ENCODE measurements at regions of chr11 and their contacts with region 1.

Region 1: DNA sequence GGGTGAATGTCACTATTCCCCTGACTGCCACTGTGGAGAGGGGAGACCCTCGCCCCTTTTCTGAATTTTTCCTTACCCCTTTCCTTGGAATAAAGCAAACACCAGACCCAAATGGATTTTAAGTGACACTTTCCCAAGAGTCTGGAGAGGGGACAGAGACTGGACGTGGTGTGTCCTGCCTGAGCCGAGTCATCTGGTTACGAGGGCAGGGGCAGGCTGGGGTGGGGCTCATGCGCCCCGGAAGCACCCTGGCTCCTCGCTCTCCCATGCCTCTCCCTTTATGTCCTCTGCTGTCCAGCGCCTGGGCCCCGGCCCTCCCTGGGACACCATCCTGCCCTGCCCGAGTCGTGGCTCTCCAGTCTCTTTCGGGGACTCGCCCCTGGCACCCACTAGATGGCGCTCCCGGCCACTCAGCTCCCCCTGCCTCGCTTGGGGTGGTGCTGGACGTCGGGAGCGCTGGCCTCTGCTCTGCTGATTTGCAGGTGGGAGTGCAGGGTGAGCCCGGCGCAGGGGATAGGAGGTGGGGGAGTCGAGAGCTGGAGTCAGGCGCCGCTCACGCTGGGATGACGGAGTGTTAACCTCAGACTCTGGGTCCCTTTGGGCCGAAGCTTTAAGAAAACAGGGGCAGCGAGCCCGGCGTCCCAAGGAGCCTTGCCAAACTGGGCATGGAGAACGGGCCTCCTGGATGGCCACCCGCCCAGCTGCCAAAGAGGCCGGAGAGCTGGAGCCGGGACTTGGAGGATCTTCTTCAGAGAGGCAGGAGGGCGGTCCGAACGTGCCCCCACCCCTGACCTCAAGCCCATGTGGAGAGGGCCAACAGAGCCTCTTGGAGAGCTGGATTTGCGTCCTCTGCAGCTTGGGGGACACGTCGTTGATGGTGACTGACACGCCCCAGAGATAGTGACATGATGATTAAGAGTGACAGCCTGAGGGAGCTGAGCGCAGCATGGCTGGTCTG is 89.9 kb downstream of the RPS6KA4 start:
- DNase-seq: peak; percentile 74
- H3K4me3 Mint-ChIP-seq: peak overlapping the region; percentile 58
- H3K27ac Mint-ChIP-seq: no peak overlapping the region
- H3K4me1 Mint-ChIP-seq: peaks cover 17% of the 10 kb centered on the region
- H3K27me3 Mint-ChIP-seq: peaks cover 20% of the 10 kb centered on the region

Region 2: DNA sequence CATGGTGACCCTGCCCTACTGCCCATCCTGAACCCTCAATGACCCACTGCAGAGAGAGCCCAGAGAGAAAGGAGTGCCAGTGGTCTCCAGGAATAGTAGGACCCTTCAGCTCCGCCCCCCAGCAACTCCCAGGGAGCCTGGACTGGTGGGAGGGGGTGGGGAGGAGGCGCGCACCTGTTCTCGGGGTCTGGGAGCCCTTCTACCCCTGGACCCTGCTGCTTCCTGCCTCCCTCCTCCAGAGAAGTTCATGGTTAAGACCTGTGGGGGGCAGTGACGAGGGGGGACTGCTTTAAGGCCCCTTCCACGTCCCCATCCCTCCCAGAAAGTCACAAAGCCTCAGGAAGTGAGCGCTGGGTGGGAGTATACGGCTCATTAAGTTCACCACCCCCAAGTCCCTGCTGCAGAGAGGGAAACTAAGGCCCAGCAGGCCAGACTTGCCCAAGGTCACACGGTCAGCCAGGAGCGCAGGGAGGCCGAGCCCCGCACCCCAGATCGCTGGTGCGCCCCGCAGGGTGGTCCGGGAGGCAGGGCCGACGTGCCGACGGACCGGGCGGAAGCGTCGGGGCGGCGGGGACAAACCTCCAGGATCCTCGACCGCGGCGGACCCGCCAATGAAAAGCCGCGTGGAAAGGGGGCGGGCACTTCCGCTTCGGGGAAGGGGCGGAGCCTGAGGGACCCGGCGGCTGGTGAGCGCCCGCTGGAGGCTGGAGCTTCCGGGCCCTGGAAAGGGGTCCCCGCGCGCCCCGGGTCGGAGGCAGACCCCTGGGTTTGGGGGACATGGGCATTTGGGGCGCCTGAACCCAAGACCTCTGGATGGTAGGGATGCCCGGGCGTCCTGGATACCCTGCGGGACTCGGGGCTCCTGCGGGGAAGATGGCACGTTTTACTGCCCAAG is 223.0 kb before region 1 on chr11 and contains the starts of genes NUDT22 and TRPT1:
- CTCF ChIA-PET with region 1: no interaction called
- POLR2A ChIA-PET with region 1: no interaction called
- DNase-seq: peak; percentile 94
- H3K4me3 Mint-ChIP-seq: peak within 1 kb of the TSS; percentile 88
- H3K27ac Mint-ChIP-seq: peak within 1 kb of the TSS; percentile 79
- H3K4me1 Mint-ChIP-seq: peaks cover 40% of the 10 kb centered on the region
- H3K27me3 Mint-ChIP-seq: no peaks in the 10 kb centered on the region
- total RNA-seq, gene NUDT22: 84.8 to 90.6 TPM
- total RNA-seq, gene TRPT1: 34.7 to 35.3 TPM

Region 3: DNA sequence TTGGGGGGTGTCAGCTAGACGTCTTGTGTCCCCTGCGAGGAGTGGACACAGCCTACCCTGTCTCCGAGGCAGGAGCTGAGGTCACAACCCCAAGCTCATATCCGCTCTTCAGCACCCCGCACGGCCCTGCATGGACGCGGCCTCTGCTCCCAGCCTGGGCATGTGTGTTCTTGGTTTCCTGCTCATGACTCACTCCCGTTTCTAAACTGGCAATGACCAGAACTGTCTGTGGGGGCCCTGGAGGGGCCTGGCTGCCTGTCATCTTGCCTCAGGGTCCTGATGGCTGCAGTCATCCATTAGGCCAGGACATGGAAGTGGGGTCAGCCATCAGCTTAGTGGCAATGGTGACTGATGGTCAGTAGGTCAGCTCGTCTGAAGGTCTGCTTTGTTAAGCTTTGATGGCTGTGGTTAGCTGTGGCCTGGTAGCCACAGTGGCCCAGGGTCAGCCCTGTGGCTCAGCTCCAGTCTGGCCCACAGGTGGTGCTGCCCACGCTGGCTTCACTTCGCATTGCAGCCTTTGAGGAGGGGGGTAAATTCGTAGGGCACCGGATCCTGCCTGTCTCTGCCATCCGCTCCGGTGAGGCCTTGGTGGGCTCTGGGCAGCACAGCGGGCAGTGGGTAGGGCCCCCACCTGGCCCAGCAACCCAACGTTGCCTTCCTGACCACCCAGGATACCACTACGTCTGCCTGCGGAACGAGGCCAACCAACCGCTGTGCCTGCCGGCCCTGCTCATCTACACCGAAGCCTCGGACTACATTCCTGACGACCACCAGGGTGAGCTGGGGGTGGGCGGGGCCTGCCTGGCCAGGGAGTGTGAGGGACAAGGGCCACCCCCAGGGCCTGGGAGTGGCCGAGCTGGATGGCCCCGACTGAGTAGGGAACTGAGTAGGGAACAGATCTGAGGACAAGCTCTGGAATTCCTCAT is 185.6 kb before region 1 on chr11:
- CTCF ChIA-PET with region 1: no interaction called
- POLR2A ChIA-PET with region 1: no interaction called
- DNase-seq: no peak
- H3K4me3 Mint-ChIP-seq: no peak overlapping the region
- H3K27ac Mint-ChIP-seq: no peak overlapping the region
- H3K4me1 Mint-ChIP-seq: peaks cover 17% of the 10 kb centered on the region
- H3K27me3 Mint-ChIP-seq: no peaks in the 10 kb centered on the region

Region 4: DNA sequence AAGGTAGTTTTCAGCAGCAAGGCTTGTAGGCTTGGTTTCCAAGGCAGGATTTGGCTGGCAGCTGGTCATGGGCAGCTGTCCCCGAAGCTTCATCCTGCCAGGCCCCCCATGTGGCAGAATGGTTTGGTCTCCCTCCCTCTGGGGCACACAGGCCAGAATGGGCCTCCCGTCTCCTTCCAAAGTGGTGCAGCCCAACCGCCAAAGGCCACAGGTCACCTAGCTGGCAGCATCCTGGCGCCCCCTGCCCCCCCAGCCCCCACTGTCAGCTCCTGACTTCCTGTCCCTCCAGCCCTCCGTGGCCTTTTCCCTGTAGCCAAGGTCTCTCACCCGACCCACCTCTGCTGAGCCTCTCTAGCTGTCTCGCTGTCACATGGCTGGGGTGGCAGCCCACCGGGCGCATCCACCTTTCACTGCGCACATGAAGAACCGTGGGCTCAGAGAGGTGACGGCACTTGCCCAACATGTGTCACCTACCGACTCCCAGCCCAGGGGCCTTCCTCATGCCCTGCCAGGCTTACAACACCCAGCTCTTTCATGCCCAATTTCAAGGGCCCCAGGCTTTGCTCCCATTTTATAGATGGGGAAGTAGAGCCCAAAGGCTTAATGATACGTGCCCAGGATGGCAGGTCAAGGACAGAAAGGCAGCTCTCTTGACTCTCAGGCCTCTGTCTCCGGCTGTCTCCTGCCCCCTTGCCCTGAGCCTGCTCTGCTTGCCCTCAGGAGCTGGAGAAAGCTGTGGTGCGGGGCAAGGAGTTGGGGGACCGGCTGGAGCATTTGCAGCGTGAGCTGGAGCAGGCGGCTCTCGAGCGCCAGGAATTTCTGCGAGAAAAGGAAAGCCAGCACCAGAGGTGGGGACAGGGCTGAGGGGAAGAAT is 100.0 kb before region 1 on chr11:
- CTCF ChIA-PET with region 1: no interaction called
- POLR2A ChIA-PET with region 1: no interaction called
- DNase-seq: no peak
- H3K4me3 Mint-ChIP-seq: no peak overlapping the region
- H3K27ac Mint-ChIP-seq: no peak overlapping the region
- H3K4me1 Mint-ChIP-seq: peaks cover 13% of the 10 kb centered on the region
- H3K27me3 Mint-ChIP-seq: no peaks in the 10 kb centered on the region

Region 5: DNA sequence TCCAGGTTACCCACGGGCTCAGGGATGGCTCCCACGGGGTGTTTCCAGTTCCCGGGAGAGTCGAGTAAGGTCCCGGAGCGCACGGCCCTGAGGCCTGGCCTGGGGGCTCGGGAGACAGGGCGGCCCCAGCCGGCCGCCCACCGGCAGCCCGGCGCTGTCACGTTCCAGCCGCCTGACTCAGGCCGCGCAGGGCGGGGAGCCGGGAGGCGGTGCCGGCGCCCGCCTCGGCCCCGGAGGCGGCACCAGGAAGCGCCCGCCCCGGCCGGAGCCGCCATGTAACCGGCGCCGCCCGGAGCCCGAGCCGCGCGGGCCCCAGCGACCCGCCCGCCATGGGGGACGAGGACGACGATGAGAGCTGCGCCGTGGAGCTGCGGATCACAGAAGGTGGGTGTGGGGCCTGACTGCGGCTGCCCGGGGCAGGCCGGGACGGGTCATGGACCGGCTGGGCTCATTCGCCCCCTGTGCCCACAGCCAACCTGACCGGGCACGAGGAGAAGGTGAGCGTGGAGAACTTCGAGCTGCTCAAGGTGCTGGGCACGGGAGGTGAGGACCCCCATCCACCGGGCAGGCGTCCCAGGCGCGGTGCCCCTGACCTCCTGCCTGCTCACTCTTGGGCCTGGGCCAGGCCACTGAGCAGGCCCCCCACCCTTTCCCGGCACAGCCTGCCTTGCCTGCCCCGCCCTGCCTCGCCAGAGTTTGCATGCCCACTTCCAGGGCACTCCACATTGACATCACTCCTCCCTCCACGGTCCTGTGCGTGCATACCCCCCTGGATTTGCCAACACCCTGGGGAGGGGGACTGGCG is 89.8 kb before region 1 on chr11 and contains the start of gene RPS6KA4:
- CTCF ChIA-PET with region 1: interaction called, 14 read pairs
- POLR2A ChIA-PET with region 1: no interaction called
- DNase-seq: peak; percentile 65
- H3K4me3 Mint-ChIP-seq: peak within 1 kb of the TSS; percentile 92
- H3K27ac Mint-ChIP-seq: peak within 1 kb of the TSS; percentile 89
- H3K4me1 Mint-ChIP-seq: peaks cover 40% of the 10 kb centered on the region
- H3K27me3 Mint-ChIP-seq: no peaks in the 10 kb centered on the region
- total RNA-seq, gene RPS6KA4: 40.2 to 43.5 TPM

Region 6: DNA sequence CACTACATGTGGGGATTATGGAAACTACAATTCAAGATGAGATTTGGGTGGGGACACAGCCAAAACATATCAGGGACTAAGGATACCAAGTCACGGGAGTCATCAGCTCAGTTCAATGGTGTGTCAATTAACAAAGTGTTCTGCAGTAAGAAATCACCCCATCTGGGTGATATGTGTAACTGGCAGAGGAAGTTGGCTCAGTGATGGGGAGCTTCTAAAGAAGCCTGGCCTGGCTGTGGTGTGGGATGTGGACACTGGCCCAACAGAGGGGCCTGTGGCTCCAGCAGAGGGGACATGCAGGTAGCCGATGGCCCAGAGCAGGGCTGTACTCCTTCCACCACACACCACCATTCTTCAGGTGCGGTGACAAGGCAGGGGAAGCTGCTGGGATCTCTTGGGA is 58.3 kb before region 1 on chr11:
- CTCF ChIA-PET with region 1: interaction called, 13 read pairs
- POLR2A ChIA-PET with region 1: no interaction called
- DNase-seq: no peak
- H3K4me3 Mint-ChIP-seq: no peak overlapping the region
- H3K27ac Mint-ChIP-seq: no peak overlapping the region
- H3K4me1 Mint-ChIP-seq: peaks cover 24% of the 10 kb centered on the region
- H3K27me3 Mint-ChIP-seq: peaks cover 8% of the 10 kb centered on the region

Region 7: GRCh38 chr11:64458997-64459396 is 10.1 kb after region 1 on chr11:
- CTCF ChIA-PET with region 1: interaction called, 20 read pairs
- POLR2A ChIA-PET with region 1: no interaction called
- DNase-seq: no peak
- H3K4me3 Mint-ChIP-seq: no peak overlapping the region
- H3K27ac Mint-ChIP-seq: no peak overlapping the region
- H3K4me1 Mint-ChIP-seq: no peaks in the 10 kb centered on the region
- H3K27me3 Mint-ChIP-seq: peaks cover 4% of the 10 kb centered on the region

Region 8: DNA sequence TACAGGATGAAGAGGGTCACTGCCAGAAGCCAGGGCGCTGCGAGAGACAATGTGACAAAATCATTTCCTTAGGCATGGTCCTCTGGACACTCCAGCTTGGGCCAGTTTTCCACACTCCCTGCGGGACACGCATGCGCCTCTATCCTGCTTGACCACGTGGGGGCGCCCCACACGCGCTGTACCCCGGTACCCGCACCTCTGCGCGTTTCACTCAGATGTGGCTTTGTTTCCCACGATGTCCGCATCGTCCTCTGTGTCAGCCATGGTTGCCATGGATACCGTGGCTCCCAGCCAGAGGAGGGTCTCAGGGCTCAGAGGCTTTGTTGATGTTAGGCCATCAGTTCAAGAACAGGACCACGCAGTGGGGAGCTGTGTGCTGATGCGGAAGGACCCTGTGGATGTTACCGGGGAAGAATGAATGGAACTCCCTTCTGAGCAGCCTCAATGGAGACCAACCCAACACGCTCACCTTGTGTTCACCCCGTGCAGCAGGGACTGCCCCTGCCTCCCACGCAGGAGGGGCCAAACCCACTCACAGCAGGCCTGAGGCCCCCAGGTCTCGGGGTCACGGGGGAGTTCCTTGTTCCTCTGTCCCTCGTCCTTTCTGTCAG is 41.1 kb after region 1 on chr11:
- CTCF ChIA-PET with region 1: interaction called, 11 read pairs
- POLR2A ChIA-PET with region 1: no interaction called
- DNase-seq: peak; percentile 44
- H3K4me3 Mint-ChIP-seq: no peak overlapping the region
- H3K27ac Mint-ChIP-seq: no peak overlapping the region
- H3K4me1 Mint-ChIP-seq: peaks cover 10% of the 10 kb centered on the region
- H3K27me3 Mint-ChIP-seq: peaks cover 38% of the 10 kb centered on the region

Region 9: DNA sequence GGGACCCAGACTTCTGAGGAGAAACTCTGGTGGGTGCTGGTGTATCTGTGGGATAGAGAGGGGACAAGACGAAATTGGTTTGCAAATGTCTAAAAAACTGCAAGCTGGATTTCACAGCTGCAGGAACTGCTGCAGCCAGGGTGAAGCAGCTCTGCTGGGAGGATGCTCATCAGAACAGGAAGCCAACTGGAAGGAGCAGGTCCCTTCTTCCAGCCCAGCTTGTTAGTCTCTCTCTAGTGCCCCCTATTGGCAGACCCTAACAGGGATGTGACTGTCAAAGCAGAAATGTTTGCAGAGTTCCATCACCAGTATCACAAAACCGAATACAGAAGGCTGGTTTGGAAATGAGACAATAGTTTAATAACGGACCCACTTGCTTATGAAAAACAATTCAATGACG is 67.3 kb after region 1 on chr11:
- CTCF ChIA-PET with region 1: interaction called, 10 read pairs
- POLR2A ChIA-PET with region 1: no interaction called
- DNase-seq: peak; percentile 29
- H3K4me3 Mint-ChIP-seq: no peak overlapping the region
- H3K27ac Mint-ChIP-seq: no peak overlapping the region
- H3K4me1 Mint-ChIP-seq: no peaks in the 10 kb centered on the region
- H3K27me3 Mint-ChIP-seq: peaks cover 21% of the 10 kb centered on the region

Region 10: GRCh38 chr11:64542201-64543125 is 93.6 kb after region 1 on chr11:
- CTCF ChIA-PET with region 1: no interaction called
- POLR2A ChIA-PET with region 1: no interaction called
- DNase-seq: no peak
- H3K4me3 Mint-ChIP-seq: no peak overlapping the region
- H3K27ac Mint-ChIP-seq: no peak overlapping the region
- H3K4me1 Mint-ChIP-seq: no peaks in the 10 kb centered on the region
- H3K27me3 Mint-ChIP-seq: peaks cover 12% of the 10 kb centered on the region

Region 11: GRCh38 chr11:64652586-64653387 is 203.9 kb after region 1 on chr11:
- CTCF ChIA-PET with region 1: interaction called, 17 read pairs
- POLR2A ChIA-PET with region 1: no interaction called
- DNase-seq: peak; percentile 72
- H3K4me3 Mint-ChIP-seq: no peak overlapping the region
- H3K27ac Mint-ChIP-seq: no peak overlapping the region
- H3K4me1 Mint-ChIP-seq: peaks cover 6% of the 10 kb centered on the region
- H3K27me3 Mint-ChIP-seq: no peaks in the 10 kb centered on the region